Heart left ventricle (tissue), 16 donors: ENCODE measurements at regions of chr15 and their contacts with region 1.

Region 1: GRCh38 chr15:49286649-49287404 is 116.8 kb downstream of the GALK2 start:
- DNase-seq: no peak
- ATAC-seq: no peak
- H3K4me3 ChIP-seq: no peak overlapping the region
- H3K27ac ChIP-seq: peak overlapping the region in 1 of 12 donors; percentile 15
- H3K4me1 ChIP-seq: peaks cover 0 to 10% (median 0%) of the 10 kb centered on the region in 12 donors
- H3K27me3 ChIP-seq: no peaks in the 10 kb centered on the region
- CTCF ChIP-seq: no peak
- POLR2A ChIP-seq: no peak

Region 2: GRCh38 chr15:49168016-49168415 is 118.8 kb before region 1 on chr15:
- intact Hi-C with region 1: no loop called
- DNase-seq: no peak
- ATAC-seq: no peak
- H3K4me3 ChIP-seq: no peak overlapping the region
- H3K27ac ChIP-seq: no peak overlapping the region
- H3K4me1 ChIP-seq: peaks cover 0 to 32% (median 7%) of the 10 kb centered on the region in 12 donors
- H3K27me3 ChIP-seq: no peaks in the 10 kb centered on the region
- CTCF ChIP-seq: no peak
- POLR2A ChIP-seq: no peak

Region 3: GRCh38 chr15:49242820-49243219 is 44.0 kb before region 1 on chr15:
- intact Hi-C with region 1: loop called in 1 of 10 experiments (anchors 5 kb)
- DNase-seq: peak in 1 of 5 donors; percentile 41
- ATAC-seq: peak in 2 of 4 donors; percentile 77 to 84
- H3K4me3 ChIP-seq: no peak overlapping the region
- H3K27ac ChIP-seq: no peak overlapping the region
- H3K4me1 ChIP-seq: peaks cover 0 to 26% (median 5%) of the 10 kb centered on the region in 12 donors
- H3K27me3 ChIP-seq: no peaks in the 10 kb centered on the region
- CTCF ChIP-seq: no peak
- POLR2A ChIP-seq: no peak